ENCODE measurements at regions of chr6 and their contacts with region 1.

Region 1: GRCh38 chr6:144647971-144648651 is 363.0 kb downstream of the UTRN start:
- DNase-seq: no peak
- ATAC-seq: no peak
- H3K4me3 ChIP-seq: no peak overlapping the region
- H3K27ac ChIP-seq: no peak overlapping the region
- H3K4me1 ChIP-seq: peaks cover 9% of the 10 kb centered on the region; the same call in 1 of the 2 replicates
- H3K27me3 ChIP-seq: no peaks in the 10 kb centered on the region
- CTCF ChIP-seq: peak; percentile 47; the same call in 1 of the 2 replicates

Region 2: DNA sequence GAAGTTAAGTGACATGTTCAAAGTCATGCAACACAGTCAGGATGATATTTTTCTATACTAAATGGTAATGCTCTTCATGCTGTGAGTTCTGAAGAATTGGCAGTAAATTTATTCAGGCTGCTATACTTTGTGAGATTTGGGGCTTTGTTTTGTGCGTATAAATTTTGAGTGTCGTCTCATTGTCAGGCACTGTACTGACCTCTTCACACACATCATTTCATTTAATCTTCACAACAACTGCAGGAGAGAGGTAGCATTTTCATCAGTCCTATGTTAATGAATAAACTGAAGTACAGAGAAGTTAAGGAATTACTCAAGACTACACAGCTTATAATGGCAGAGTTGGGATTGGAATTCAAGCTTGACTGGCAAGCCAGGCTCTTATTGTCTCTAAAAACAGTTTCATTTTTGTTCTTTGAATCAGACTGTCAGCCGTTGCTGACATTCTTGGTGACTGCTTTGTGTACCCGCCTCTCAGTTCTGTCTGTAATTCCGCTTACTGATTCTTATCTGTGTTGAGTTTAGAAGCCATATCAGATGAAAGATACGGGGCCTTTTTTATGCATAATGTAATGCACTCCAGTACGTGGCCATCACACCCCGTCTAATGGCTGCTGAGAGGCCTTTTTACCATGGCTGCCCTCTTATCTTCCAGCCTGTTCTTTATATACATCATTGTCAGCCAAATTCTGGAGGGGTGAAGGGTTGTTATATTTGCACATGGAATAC is 88.1 kb before region 1 on chr6:
- CTCF ChIA-PET with region 1: no interaction called
- POLR2A ChIA-PET with region 1: no interaction called
- intact Hi-C with region 1: no loop called
- DNase-seq: no peak
- ATAC-seq: no peak
- H3K4me3 ChIP-seq: no peak overlapping the region
- H3K27ac ChIP-seq: no peak overlapping the region
- H3K4me1 ChIP-seq: no peaks in the 10 kb centered on the region
- H3K27me3 ChIP-seq: no peaks in the 10 kb centered on the region
- CTCF ChIP-seq: no peak

Region 3: GRCh38 chr6:144613859-144614258 is 34.3 kb before region 1 on chr6:
- CTCF ChIA-PET with region 1: no interaction called
- POLR2A ChIA-PET with region 1: no interaction called
- intact Hi-C with region 1: no loop called
- DNase-seq: peak; percentile 67
- ATAC-seq: peak; percentile 57
- H3K4me3 ChIP-seq: no peak overlapping the region
- H3K27ac ChIP-seq: no peak overlapping the region
- H3K4me1 ChIP-seq: no peaks in the 10 kb centered on the region; the same call in 1 of the 2 replicates
- H3K27me3 ChIP-seq: no peaks in the 10 kb centered on the region
- CTCF ChIP-seq: no peak

Region 4: GRCh38 chr6:144744720-144745119 is 96.6 kb after region 1 on chr6:
- CTCF ChIA-PET with region 1: no interaction called
- POLR2A ChIA-PET with region 1: no interaction called
- intact Hi-C with region 1: no loop called
- DNase-seq: no peak
- ATAC-seq: no peak
- H3K4me3 ChIP-seq: no peak overlapping the region
- H3K27ac ChIP-seq: no peak overlapping the region
- H3K4me1 ChIP-seq: no peaks in the 10 kb centered on the region
- H3K27me3 ChIP-seq: no peaks in the 10 kb centered on the region
- CTCF ChIP-seq: no peak

Region 5: GRCh38 chr6:144931172-144932035 is 283.3 kb after region 1 on chr6:
- CTCF ChIA-PET with region 1: no interaction called
- POLR2A ChIA-PET with region 1: no interaction called
- intact Hi-C with region 1: loop called (anchors 2 kb)
- DNase-seq: peak; percentile 66
- ATAC-seq: peak; percentile 67
- H3K4me3 ChIP-seq: no peak overlapping the region
- H3K27ac ChIP-seq: peak overlapping the region; percentile 36
- H3K4me1 ChIP-seq: no peaks in the 10 kb centered on the region
- H3K27me3 ChIP-seq: no peaks in the 10 kb centered on the region
- CTCF ChIP-seq: peak; percentile 71

Region 6: GRCh38 chr6:145214570-145214969 is 566.5 kb after region 1 on chr6:
- CTCF ChIA-PET with region 1: interaction called, 3 read pairs
- POLR2A ChIA-PET with region 1: no interaction called
- intact Hi-C with region 1: loop called (anchors 5 kb)
- DNase-seq: peak; percentile 53
- ATAC-seq: no peak
- H3K4me3 ChIP-seq: no peak overlapping the region
- H3K27ac ChIP-seq: no peak overlapping the region
- H3K4me1 ChIP-seq: no peaks in the 10 kb centered on the region
- H3K27me3 ChIP-seq: no peaks in the 10 kb centered on the region
- CTCF ChIP-seq: peak; percentile 66; the same call in 1 of the 2 replicates

Measured in PC-3 (cell line).